Naive thymus-derived CD8-positive, alpha-beta T cell (primary cell): ENCODE measurements at regions of chr4 and their contacts with region 1.

Region 1: GRCh38 chr4:2811830-2812611 is 19.1 kb downstream of the SH3BP2 start:
- DNase-seq: peak; percentile 21 to 73 (median 52)
- ATAC-seq: peak; percentile 74 to 76
- H3K4me3 Mint-ChIP-seq: peak overlapping the region; percentile 77 to 100 (median 92)
- H3K27ac Mint-ChIP-seq: peak overlapping the region; percentile 96 to 100 (median 98)
- H3K4me1 Mint-ChIP-seq: peaks cover 38 to 81% (median 61%) of the 10 kb centered on the region in 4 donors
- H3K27me3 Mint-ChIP-seq: no peaks in the 10 kb centered on the region

Region 2: GRCh38 chr4:2787230-2788088 is 24.6 kb before region 1 on chr4:
- POLR2A ChIA-PET with region 1: interaction called, 28 read pairs
- DNase-seq: peak in 9 of 10 donors; percentile 26 to 77 (median 52)
- ATAC-seq: peak; percentile 53 to 59
- H3K4me3 Mint-ChIP-seq: peak overlapping the region; percentile 12 to 79 (median 63)
- H3K27ac Mint-ChIP-seq: peak overlapping the region; percentile 88 to 95 (median 92)
- H3K4me1 Mint-ChIP-seq: peaks cover 20 to 65% (median 57%) of the 10 kb centered on the region in 4 donors
- H3K27me3 Mint-ChIP-seq: no peaks in the 10 kb centered on the region

Region 3: GRCh38 chr4:2800691-2801596 is 11.1 kb before region 1 on chr4:
- POLR2A ChIA-PET with region 1: interaction called, 91 read pairs
- DNase-seq: peak in 2 of 10 donors; percentile 41 to 56
- ATAC-seq: peak in 1 of 2 donors; percentile 16
- H3K4me3 Mint-ChIP-seq: peak overlapping the region in 7 of 10 donors; percentile 41 to 79 (median 56)
- H3K27ac Mint-ChIP-seq: peak overlapping the region in 4 of 10 donors; percentile 35 to 79 (median 74)
- H3K4me1 Mint-ChIP-seq: peaks cover 18 to 72% (median 43%) of the 10 kb centered on the region in 4 donors
- H3K27me3 Mint-ChIP-seq: no peaks in the 10 kb centered on the region

Region 4: DNA sequence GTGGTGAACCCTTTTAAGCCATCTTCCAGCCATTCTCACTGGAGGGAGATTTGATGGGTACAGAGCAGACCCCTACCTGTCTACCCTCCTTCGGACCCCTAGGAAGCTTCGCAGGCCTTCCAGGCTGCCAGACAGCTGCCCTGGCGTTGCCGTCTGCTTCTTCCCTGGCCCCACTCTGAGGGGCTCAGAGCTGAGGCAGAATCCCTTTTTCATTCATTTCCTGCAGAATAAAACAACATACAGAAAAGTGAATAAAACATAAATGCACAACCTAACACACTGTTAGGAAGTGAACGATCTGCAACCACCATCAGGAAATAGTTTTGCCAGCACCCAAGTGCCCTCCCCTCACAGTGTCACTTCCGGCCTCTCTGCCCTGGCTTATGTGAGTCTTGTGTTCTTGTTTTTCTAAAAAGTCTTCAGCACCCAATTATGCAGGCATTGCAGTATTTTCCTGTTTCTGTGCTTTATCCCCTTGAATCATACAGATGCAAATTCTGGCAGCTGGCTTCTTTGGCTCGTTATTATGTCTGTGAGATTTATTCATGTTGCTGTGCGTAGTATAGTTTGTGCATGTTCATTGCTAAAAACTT is 26.0 kb after region 1 on chr4:
- POLR2A ChIA-PET with region 1: interaction called, 62 read pairs
- DNase-seq: peak; percentile 44 to 88 (median 74)
- ATAC-seq: peak; percentile 96 to 98
- H3K4me3 Mint-ChIP-seq: peak overlapping the region; percentile 70 to 95 (median 87)
- H3K27ac Mint-ChIP-seq: peak overlapping the region; percentile 86 to 99 (median 92)
- H3K4me1 Mint-ChIP-seq: peaks cover 29 to 83% (median 68%) of the 10 kb centered on the region in 4 donors
- H3K27me3 Mint-ChIP-seq: no peaks in the 10 kb centered on the region

Region 5: GRCh38 chr4:2843263-2843940 is 31.4 kb after region 1 on chr4 and contains the start of gene ADD1:
- POLR2A ChIA-PET with region 1: interaction called, 62 read pairs
- DNase-seq: peak; percentile 89 to 100 (median 94)
- ATAC-seq: peak; percentile 85 to 94
- H3K4me3 Mint-ChIP-seq: peak within 1 kb of the TSS; percentile 90 to 97 (median 92)
- H3K27ac Mint-ChIP-seq: peak within 1 kb of the TSS; percentile 87 to 96 (median 93)
- H3K4me1 Mint-ChIP-seq: peaks cover 23 to 74% (median 69%) of the 10 kb centered on the region in 4 donors
- H3K27me3 Mint-ChIP-seq: no peaks in the 10 kb centered on the region
- polyA plus RNA-seq, gene ADD1: 129 to 151 (median 150) TPM

Region 6: DNA sequence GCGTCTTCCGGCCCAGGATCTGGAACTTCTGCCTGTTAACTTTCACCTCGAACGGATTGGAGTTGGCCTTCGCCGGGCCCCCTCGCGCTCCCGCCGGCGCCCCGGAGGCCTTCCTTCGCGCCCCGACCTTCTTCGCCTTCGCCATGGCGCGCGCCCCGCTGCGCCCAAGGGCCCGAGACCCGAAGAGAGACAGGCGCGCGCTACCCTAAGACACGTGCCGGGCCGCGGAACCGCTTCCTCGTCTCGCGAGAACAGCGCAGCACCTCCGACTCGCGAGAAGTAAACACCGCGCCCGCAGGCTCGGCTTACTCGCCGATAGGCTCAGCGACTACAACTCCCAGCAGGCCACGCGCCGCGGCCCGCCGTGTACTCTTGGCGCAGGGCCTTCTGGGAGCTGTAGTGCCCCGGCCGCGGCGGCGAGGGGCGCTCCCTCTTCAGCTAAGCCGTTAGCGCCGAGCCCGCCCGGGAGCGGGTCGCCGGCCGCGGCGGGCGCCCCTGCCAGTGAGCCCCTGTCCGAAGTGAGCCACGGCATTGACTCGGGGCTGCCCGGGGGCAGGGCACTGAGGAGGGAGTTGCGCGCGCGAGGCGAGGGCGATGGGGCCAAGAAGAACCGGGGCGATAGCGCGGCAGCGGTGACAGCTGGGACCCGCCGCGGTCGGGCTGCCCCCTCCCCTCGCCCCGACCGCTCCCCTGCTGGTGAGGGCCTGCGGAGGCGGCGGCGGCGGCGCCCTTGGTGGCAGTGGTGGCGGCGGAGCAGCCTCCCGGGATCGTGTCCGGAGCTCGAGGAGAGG is 151.3 kb after region 1 on chr4 and contains the starts of genes GRK4 and NOP14:
- POLR2A ChIA-PET with region 1: interaction called, 12 read pairs
- DNase-seq: peak; percentile 94 to 99 (median 97)
- ATAC-seq: peak; percentile 80 to 90
- H3K4me3 Mint-ChIP-seq: peak within 1 kb of the TSS; percentile 79 to 92 (median 88)
- H3K27ac Mint-ChIP-seq: peak within 1 kb of the TSS; percentile 82 to 96 (median 90)
- H3K4me1 Mint-ChIP-seq: peaks cover 19 to 48% (median 37%) of the 10 kb centered on the region in 4 donors
- H3K27me3 Mint-ChIP-seq: no peaks in the 10 kb centered on the region
- polyA plus RNA-seq, gene GRK4: 0.87 to 1.5 (median 0.90) TPM
- polyA plus RNA-seq, gene NOP14: 10.8 to 31.8 (median 21.8) TPM